ENCODE measurements at regions of chr1 and their contacts with region 1.

Region 1: GRCh38 chr1:26787706-26788514 is at the start of gene PIGV:
- DNase-seq: peak; percentile 89 to 97 (median 96)
- ATAC-seq: peak; percentile 92
- H3K4me3 ChIP-seq: peak within 1 kb of the TSS; percentile 81
- H3K27ac ChIP-seq: peak within 1 kb of the TSS; percentile 100
- H3K4me1 ChIP-seq: peaks cover 16% of the 10 kb centered on the region
- H3K27me3 ChIP-seq: no peaks in the 10 kb centered on the region
- total RNA-seq, gene PIGV: 5.2 to 7.3 (median 5.9) TPM

Region 2: GRCh38 chr1:26500488-26501175 is 287.3 kb before region 1 on chr1:
- intact Hi-C with region 1: loop called in 1 of 4 experiments (anchors 10 kb)
- DNase-seq: peak; percentile 88 to 97 (median 95)
- ATAC-seq: peak; percentile 94 to 95
- H3K4me3 ChIP-seq: peak overlapping the region; percentile 67
- H3K27ac ChIP-seq: peak overlapping the region; percentile 94
- H3K4me1 ChIP-seq: peaks cover 2% of the 10 kb centered on the region
- H3K27me3 ChIP-seq: no peaks in the 10 kb centered on the region

Region 3: GRCh38 chr1:26529655-26530409 is 258.1 kb before region 1 on chr1 and contains the start of gene RPS6KA1:
- intact Hi-C with region 1: no loop called
- DNase-seq: peak; percentile 61 to 87 (median 82)
- ATAC-seq: peak; percentile 78
- H3K4me3 ChIP-seq: peak within 1 kb of the TSS; percentile 71
- H3K27ac ChIP-seq: no peak within 1 kb of the TSS
- H3K4me1 ChIP-seq: no peaks in the 10 kb centered on the region
- H3K27me3 ChIP-seq: no peaks in the 10 kb centered on the region
- total RNA-seq, gene RPS6KA1: 2.7 to 7.0 (median 5.6) TPM

Region 4: DNA sequence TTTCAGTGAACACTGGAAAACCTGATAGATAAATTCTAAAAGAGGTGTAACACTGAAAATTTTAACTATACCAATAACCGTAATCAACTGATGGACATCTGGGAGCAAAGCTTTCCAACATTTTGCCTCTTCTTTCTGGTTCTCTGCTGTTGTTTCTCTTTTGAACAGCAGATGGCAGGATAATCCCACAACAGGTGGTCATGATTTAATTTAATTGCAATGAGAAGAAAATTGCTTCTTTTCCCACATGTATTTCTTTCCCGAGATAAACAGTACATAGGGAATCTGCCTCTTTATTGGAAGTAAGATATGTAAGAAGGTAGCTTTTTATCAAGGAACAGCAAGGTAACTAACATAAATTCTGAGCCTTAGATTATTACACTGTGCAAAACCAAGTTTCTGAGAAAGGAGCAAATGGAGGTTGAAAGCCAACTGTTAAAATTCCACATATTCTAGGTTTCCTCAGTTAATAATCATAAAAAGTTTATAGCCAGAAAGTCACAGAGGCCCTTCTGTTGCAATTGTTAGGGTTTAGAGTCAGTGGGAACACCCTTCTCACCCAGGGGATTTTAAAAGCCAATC is 185.4 kb before region 1 on chr1:
- intact Hi-C with region 1: loop called (anchors 1 to 5 kb)
- DNase-seq: no peak
- ATAC-seq: peak in 1 of 2 donors; percentile 23
- H3K4me3 ChIP-seq: no peak overlapping the region
- H3K27ac ChIP-seq: no peak overlapping the region
- H3K4me1 ChIP-seq: no peaks in the 10 kb centered on the region
- H3K27me3 ChIP-seq: no peaks in the 10 kb centered on the region

Region 5: GRCh38 chr1:26695356-26696118 is 92.4 kb before region 1 on chr1 and contains the start of gene ARID1A:
- intact Hi-C with region 1: loop called (anchors 2 to 10 kb)
- DNase-seq: peak; percentile 95 to 99 (median 98)
- ATAC-seq: peak; percentile 81 to 84
- H3K4me3 ChIP-seq: peak within 1 kb of the TSS; percentile 98
- H3K27ac ChIP-seq: peak within 1 kb of the TSS; percentile 99
- H3K4me1 ChIP-seq: peaks cover 7% of the 10 kb centered on the region
- H3K27me3 ChIP-seq: no peaks in the 10 kb centered on the region
- total RNA-seq, gene ARID1A: 33.1 to 45.3 (median 40.0) TPM

Region 6: GRCh38 chr1:26705788-26706311 is 82.1 kb before region 1 on chr1:
- intact Hi-C with region 1: loop called in 1 of 4 experiments (anchors 10 kb)
- DNase-seq: no peak
- ATAC-seq: peak; percentile 21 to 24
- H3K4me3 ChIP-seq: no peak overlapping the region
- H3K27ac ChIP-seq: peak overlapping the region; percentile 53
- H3K4me1 ChIP-seq: peaks cover 32% of the 10 kb centered on the region
- H3K27me3 ChIP-seq: no peaks in the 10 kb centered on the region

Measured in right cardiac atrium (tissue), 5 donors.